Left ventricle myocardium inferior (tissue), 1 donor: ENCODE measurements at regions of chr15 and their contacts with region 1.

Region 1: GRCh38 chr15:98428253-98428989 is 219.9 kb upstream of the IGF1R start:
- DNase-seq: peak; percentile 71
- H3K4me3 ChIP-seq: peak overlapping the region; percentile 59
- H3K27ac ChIP-seq: peak overlapping the region; percentile 24
- H3K4me1 ChIP-seq: peaks cover 6% of the 10 kb centered on the region
- H3K27me3 ChIP-seq: peaks cover 93% of the 10 kb centered on the region
- CTCF ChIP-seq: peak; percentile 89

Region 2: DNA sequence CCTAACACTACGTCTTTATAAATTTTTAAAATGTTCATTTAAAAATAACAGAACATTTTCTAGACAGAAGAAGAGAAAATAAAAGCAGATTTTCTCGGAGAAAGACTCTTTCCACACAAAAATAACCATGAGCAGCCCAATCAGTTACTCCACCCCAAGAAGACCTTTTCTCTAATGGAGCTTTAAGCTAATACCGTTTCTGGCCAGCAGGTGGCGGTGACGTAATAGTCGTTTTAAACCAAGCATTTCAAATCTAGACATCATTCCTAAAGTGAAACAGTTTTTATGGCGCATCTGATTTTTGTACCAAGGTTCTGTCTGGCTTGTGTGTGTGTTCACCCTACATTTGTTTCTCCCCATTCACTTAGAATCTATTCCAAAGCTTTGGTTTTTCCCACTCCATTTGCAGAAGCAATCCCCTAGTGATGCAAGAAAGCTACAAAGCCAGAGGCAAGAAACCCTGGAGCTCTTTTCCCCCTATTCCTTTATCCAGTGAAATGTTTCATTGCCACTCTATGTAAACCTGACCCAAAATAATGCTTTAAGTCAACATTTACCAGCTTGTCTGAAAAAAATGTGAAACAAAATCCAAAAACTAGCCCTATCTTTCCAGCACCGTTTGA is 116.7 kb before region 1 on chr15:
- intact Hi-C with region 1: loop called (anchors 5 kb)
- DNase-seq: peak; percentile 61
- H3K4me3 ChIP-seq: no peak overlapping the region
- H3K27ac ChIP-seq: no peak overlapping the region
- H3K4me1 ChIP-seq: no peaks in the 10 kb centered on the region
- H3K27me3 ChIP-seq: peaks cover 51% of the 10 kb centered on the region
- CTCF ChIP-seq: peak; percentile 82